ENCODE measurements at regions of chr17 and their contacts with region 1.

Region 1: DNA sequence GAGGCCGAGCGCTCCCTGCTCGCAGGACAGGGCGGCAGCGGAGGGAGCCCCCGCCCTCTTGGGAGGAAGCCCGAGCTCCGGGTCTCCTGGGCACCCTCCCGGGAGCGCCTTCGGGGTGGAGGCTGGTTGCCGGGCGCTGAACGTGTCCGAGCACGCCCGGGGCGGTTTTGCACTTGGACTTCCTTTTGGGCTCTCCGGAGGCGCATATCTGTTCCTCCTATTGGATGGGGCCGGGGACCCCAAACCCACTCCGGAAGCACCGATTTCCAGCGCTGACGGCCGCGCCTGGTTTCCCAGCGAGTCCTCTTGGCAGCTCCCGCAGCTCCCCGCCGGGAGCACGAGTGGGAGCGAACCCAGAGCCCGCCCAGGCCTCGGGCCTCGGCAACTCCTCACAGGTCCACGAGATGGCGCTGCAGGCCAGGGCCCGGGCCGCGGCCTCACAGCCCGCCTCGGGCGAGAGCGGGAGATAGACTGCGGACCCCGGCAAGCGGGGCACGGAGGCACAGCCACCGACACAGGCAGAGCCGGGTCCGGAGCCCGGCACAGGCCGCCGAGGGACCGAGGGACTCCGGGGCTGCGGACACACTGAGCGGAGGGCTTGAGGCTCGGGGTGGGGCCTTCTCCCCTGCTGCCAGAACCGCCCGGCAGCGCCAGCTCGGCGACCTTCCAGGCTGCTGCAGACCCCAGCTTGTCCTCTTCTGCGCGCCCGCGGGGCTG is 12.7 kb downstream of the TBX2 start:
- DNase-seq: peak; percentile 63 to 69 (median 65)
- H3K4me3 ChIP-seq: peak overlapping the region; percentile 47 to 82 (median 58)
- H3K4me3 Mint-ChIP-seq: peak overlapping the region; percentile 77 to 89
- H3K27ac ChIP-seq: no peak overlapping the region
- H3K27ac Mint-ChIP-seq: no peak overlapping the region
- H3K4me1 ChIP-seq: peaks cover 44 to 53% of the 10 kb centered on the region in 2 donors
- H3K4me1 Mint-ChIP-seq: peaks cover 23% of the 10 kb centered on the region
- H3K27me3 ChIP-seq: peaks cover 55 to 91% of the 10 kb centered on the region in 2 donors
- H3K27me3 Mint-ChIP-seq: peaks cover 52 to 94% (median 68%) of the 10 kb centered on the region in 3 donors
- CTCF ChIP-seq: peak; percentile 99

Region 2: DNA sequence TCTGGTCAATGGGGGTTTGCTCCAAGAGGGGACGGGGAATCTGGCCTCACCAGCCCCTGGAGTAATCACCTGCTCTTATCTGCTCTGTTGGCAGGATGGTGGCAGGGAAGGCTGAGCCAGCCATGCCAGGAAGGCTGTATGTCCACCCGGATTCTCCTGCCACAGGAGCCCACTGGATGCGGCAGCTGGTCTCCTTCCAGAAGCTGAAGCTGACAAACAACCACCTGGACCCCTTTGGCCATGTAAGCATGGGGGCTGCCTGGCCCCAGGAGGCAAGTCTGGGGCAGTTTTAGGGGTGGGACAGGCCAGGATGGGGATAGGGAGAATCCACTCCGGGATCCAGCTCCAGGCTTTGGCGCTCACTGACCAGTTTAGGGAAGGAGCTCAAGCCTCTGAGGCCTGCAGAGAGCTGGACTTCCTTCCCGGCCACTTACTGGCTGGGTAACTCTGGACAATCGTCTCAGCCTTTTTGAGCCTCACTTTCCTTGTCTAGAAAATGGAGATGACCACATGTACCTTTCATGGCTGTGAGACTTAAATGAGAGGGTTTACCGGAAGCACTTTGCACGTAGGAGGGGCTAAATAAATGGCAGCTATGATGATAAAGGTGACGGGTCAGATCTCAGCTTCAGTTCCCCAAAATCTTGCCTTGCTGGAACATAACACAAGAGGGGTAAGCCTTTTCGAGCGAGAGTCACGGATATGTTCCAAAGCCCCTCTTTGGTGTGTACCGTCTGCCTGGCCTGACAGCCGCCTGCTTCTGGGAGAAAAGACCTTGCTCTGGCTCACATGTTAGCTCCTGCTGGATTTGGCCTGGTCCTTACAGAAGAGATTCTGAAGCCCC is 55.3 kb after region 1 on chr17:
- intact Hi-C with region 1: no loop called
- DNase-seq: peak; percentile 4 to 29 (median 21)
- H3K4me3 ChIP-seq: peak overlapping the region in 1 of 3 experiments; percentile 53
- H3K4me3 Mint-ChIP-seq: peak overlapping the region; percentile 54 to 90
- H3K27ac ChIP-seq: no peak overlapping the region
- H3K27ac Mint-ChIP-seq: peak overlapping the region in 2 of 7 donors; percentile 25 to 68
- H3K4me1 ChIP-seq: peaks cover 7 to 10% of the 10 kb centered on the region in 2 donors
- H3K4me1 Mint-ChIP-seq: peaks cover 14% of the 10 kb centered on the region
- H3K27me3 ChIP-seq: peaks cover 0 to 28% of the 10 kb centered on the region in 2 donors
- H3K27me3 Mint-ChIP-seq: peaks cover 19 to 38% (median 22%) of the 10 kb centered on the region in 3 donors
- CTCF ChIP-seq: no peak

Region 3: DNA sequence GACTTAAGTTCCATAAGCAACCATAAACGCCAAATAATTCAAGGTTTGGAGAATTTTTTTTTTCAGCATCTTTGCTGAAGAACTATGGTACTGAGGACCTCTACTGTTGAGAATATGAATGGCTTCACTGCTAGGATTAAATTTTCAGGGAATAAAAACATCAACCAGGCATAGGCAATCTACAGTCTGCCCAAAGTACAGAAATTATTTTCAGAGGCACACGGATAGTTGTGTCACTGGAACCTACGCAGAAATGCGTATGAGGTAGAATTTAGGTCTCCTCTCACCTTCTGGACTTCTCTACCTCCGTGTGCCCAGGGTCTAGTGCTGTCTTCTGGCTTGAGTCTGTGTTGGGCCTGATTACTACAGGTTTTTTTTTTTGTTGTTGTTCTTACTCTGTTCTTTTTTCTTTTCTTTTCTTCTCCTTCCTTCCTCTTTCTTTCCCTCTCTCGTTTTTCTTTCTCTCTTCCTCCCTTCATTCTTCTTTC is 139.0 kb after region 1 on chr17:
- intact Hi-C with region 1: loop called (anchors 10 kb)
- DNase-seq: no peak
- H3K4me3 ChIP-seq: no peak overlapping the region
- H3K4me3 Mint-ChIP-seq: no peak overlapping the region
- H3K27ac ChIP-seq: no peak overlapping the region
- H3K27ac Mint-ChIP-seq: no peak overlapping the region
- H3K4me1 ChIP-seq: no peaks in the 10 kb centered on the region
- H3K4me1 Mint-ChIP-seq: no peaks in the 10 kb centered on the region
- H3K27me3 ChIP-seq: peaks cover 8 to 19% of the 10 kb centered on the region in 2 donors
- H3K27me3 Mint-ChIP-seq: peaks cover 11 to 52% (median 37%) of the 10 kb centered on the region in 3 donors
- CTCF ChIP-seq: peak; percentile 13

Region 4: DNA sequence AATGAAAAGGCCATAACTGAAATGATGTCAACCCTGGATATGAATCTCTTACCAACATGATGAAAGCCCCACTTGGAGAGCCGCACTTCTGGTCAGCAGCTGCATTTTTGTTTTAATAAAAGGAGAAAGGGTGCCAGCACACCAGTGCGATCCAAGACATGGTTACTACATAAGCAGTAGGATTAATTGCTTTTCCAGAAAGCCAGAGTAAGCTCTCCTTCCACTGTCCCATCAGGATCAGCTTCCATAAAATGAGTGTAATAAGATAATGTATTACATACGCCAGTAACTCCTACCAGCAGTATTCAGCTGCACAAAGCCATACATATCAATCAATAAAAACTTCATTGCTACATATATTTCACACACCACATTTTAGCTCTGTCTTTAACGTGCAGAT is 205.0 kb after region 1 on chr17:
- intact Hi-C with region 1: no loop called
- DNase-seq: no peak
- H3K4me3 ChIP-seq: no peak overlapping the region
- H3K4me3 Mint-ChIP-seq: no peak overlapping the region
- H3K27ac ChIP-seq: no peak overlapping the region
- H3K27ac Mint-ChIP-seq: no peak overlapping the region
- H3K4me1 ChIP-seq: no peaks in the 10 kb centered on the region
- H3K4me1 Mint-ChIP-seq: peaks cover 4% of the 10 kb centered on the region
- H3K27me3 ChIP-seq: no peaks in the 10 kb centered on the region
- H3K27me3 Mint-ChIP-seq: peaks cover 0 to 2% (median 2%) of the 10 kb centered on the region in 3 donors
- CTCF ChIP-seq: no peak

Region 5: GRCh38 chr17:61837175-61838051 is 425.1 kb after region 1 on chr17:
- intact Hi-C with region 1: loop called (anchors 5 kb)
- DNase-seq: peak; percentile 54 to 64 (median 63)
- H3K4me3 ChIP-seq: no peak overlapping the region
- H3K4me3 Mint-ChIP-seq: no peak overlapping the region
- H3K27ac ChIP-seq: no peak overlapping the region
- H3K27ac Mint-ChIP-seq: no peak overlapping the region
- H3K4me1 ChIP-seq: no peaks in the 10 kb centered on the region
- H3K4me1 Mint-ChIP-seq: no peaks in the 10 kb centered on the region
- H3K27me3 ChIP-seq: no peaks in the 10 kb centered on the region
- H3K27me3 Mint-ChIP-seq: no peaks in the 10 kb centered on the region
- CTCF ChIP-seq: peak; percentile 93

Measured in CD14-positive monocyte (primary cell).